CD8-positive, alpha-beta T cell (primary cell): ENCODE measurements at regions of chr5 and their contacts with region 1.

Region 1: GRCh38 chr5:96752341-96753016 is 55.3 kb downstream of the ERAP1 start:
- DNase-seq: peak in 4 of 9 experiments; percentile 14 to 82 (median 65)
- ATAC-seq: peak; percentile 44
- H3K4me3 ChIP-seq: no peak overlapping the region
- H3K4me3 Mint-ChIP-seq: no peak overlapping the region
- H3K27ac ChIP-seq: no peak overlapping the region
- H3K27ac Mint-ChIP-seq: no peak overlapping the region
- H3K4me1 ChIP-seq: no peaks in the 10 kb centered on the region
- H3K4me1 Mint-ChIP-seq: no peaks in the 10 kb centered on the region
- H3K27me3 ChIP-seq: no peaks in the 10 kb centered on the region
- H3K27me3 Mint-ChIP-seq: no peaks in the 10 kb centered on the region
- CTCF ChIP-seq: peak; percentile 75

Region 2: DNA sequence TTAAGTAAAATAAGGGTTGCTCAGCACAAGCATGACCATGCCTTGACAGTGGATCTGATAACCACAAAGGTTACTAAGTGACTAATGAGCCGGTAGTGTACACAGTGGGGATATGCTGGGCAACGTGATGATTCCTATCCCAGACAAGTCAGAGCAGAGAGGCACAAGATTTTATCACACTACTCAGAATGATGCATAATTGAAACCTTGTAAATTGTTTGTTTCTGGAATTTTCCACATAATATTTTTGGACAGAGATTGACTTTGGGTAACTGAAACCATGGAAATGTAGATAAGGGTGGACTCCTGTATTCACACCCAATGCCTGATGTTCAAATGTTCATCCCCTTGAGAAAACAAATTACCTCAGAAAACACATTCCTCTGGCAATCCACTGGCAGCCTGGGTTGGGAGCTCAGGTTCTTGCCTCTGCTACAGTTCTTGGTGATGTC is 71.4 kb after region 1 on chr5:
- CTCF ChIA-PET with region 1: interaction called, 26 read pairs
- POLR2A ChIA-PET with region 1: no interaction called
- intact Hi-C with region 1: loop called (anchors 1 to 2 kb)
- DNase-seq: no peak
- ATAC-seq: peak; percentile 56
- H3K4me3 ChIP-seq: no peak overlapping the region
- H3K4me3 Mint-ChIP-seq: no peak overlapping the region
- H3K27ac ChIP-seq: no peak overlapping the region
- H3K27ac Mint-ChIP-seq: no peak overlapping the region
- H3K4me1 ChIP-seq: peaks cover 24% of the 10 kb centered on the region
- H3K4me1 Mint-ChIP-seq: peaks cover 45% of the 10 kb centered on the region
- H3K27me3 ChIP-seq: no peaks in the 10 kb centered on the region
- H3K27me3 Mint-ChIP-seq: no peaks in the 10 kb centered on the region
- CTCF ChIP-seq: no peak